ENCODE measurements at regions of chr15 and their contacts with region 1.

Region 1: GRCh38 chr15:39472621-39473297 is 108.1 kb upstream of the THBS1 start:
- DNase-seq: peak; percentile 78 to 85
- ATAC-seq: peak; percentile 64 to 86 (median 74)
- H3K4me3 ChIP-seq: no peak overlapping the region
- H3K27ac ChIP-seq: peak overlapping the region; percentile 70
- H3K4me1 ChIP-seq: no peaks in the 10 kb centered on the region
- H3K27me3 ChIP-seq: no peaks in the 10 kb centered on the region
- CTCF ChIP-seq: no peak

Region 2: GRCh38 chr15:39411102-39411989 is 61.4 kb before region 1 on chr15:
- intact Hi-C with region 1: loop called in 1 of 2 experiments (anchors 10 kb)
- DNase-seq: no peak
- ATAC-seq: no peak
- H3K4me3 ChIP-seq: no peak overlapping the region
- H3K27ac ChIP-seq: no peak overlapping the region
- H3K4me1 ChIP-seq: no peaks in the 10 kb centered on the region
- H3K27me3 ChIP-seq: no peaks in the 10 kb centered on the region
- CTCF ChIP-seq: no peak

Measured in psoas muscle (tissue), 8 donors.